Activated T-helper 2 cell treated with anti-CD3 and anti-CD28 coated beads, Interferon-gamma antibody, Interleukin-2, Interleukin-4, amounts not matched to agents 10 μg/mL and 5 μg/mL and 100 μg/mL, durations not matched to agents 14 hours and 24 hours and 36 hours (primary cell): ENCODE measurements at regions of chr3 and their contacts with region 1.

Region 1: GRCh38 chr3:31531992-31532586 is 636 bp upstream of the STT3B start:
- DNase-seq: peak; percentile 98
- H3K4me3 Mint-ChIP-seq: peak overlapping the region; percentile 82
- H3K27ac Mint-ChIP-seq: peak overlapping the region; percentile 98
- H3K4me1 Mint-ChIP-seq: peaks cover 16% of the 10 kb centered on the region
- H3K27me3 Mint-ChIP-seq: peaks cover 5% of the 10 kb centered on the region

Region 2: DNA sequence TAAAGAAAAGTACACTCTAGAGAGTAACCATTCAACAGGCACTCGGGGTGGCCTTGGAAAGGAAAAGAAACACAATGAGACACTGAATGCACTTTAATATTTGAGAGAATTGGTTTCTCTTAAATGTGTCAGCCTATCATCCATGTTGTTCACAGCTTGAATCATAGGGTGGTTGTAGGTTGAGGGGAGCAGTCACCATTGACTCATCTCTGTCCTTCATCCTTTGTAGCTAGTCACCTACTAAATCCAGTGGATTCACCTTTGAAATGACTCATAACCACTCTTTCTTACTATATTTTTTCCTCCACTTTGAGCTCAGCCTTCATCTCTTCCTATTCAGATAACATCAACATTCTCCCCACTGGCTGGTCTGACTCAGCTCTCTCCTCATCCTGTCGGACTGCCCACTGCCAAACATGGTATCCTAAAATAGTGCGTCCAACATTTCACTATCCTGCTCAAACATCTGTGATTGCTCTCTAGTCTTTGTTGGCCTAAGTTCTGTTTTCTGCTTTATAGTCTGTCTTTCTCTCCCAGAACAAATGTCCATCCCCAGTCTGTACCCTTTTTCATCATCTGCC is 455.0 kb before region 1 on chr3:
- intact Hi-C with region 1: loop called (anchors 1 kb)
- DNase-seq: peak; percentile 18
- H3K4me3 Mint-ChIP-seq: no peak overlapping the region
- H3K27ac Mint-ChIP-seq: peak overlapping the region; percentile 52
- H3K4me1 Mint-ChIP-seq: peaks cover 34% of the 10 kb centered on the region
- H3K27me3 Mint-ChIP-seq: peaks cover 7% of the 10 kb centered on the region

Region 3: DNA sequence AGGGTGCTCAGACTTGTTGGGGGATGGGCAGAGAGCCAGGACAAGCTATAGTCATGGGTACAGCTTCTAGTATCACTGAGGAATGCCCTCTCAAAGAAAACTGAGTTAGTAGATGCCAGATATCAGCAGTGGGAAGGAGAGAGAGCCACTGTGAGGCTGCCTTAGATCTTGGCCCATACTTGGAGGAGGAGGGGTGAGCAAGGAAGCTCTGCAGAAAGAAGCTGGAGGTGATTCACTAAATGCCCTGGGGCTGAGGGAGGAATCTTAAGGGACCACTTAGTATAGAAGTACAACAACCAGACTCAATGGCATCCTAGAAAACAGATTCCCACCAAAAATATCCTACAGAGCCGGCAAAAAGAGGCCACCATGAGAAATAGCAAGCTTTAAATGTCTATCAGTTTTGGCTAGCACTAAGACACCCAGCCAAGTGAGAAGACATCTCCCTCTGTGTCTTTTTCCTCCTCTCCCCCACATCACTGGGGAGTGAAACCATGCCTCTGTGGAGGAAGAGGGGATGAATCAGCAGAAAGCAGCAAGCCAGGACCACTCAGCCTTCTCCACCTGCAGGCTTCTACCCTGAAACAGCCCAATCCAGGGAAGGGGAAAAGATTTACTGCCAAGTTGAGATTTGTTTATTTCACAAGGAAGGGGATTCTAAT is 281.8 kb before region 1 on chr3:
- intact Hi-C with region 1: loop called (anchors 2 kb)
- DNase-seq: no peak
- H3K4me3 Mint-ChIP-seq: no peak overlapping the region
- H3K27ac Mint-ChIP-seq: peak overlapping the region; percentile 5
- H3K4me1 Mint-ChIP-seq: peaks cover 57% of the 10 kb centered on the region
- H3K27me3 Mint-ChIP-seq: peaks cover under 1% of the 10 kb centered on the region

Region 4: GRCh38 chr3:31321620-31322019 is 210.5 kb before region 1 on chr3:
- intact Hi-C with region 1: no loop called
- DNase-seq: no peak
- H3K4me3 Mint-ChIP-seq: no peak overlapping the region
- H3K27ac Mint-ChIP-seq: no peak overlapping the region
- H3K4me1 Mint-ChIP-seq: no peaks in the 10 kb centered on the region
- H3K27me3 Mint-ChIP-seq: peaks cover 7% of the 10 kb centered on the region

Region 5: GRCh38 chr3:31754575-31755278 is 222.6 kb after region 1 on chr3:
- intact Hi-C with region 1: loop called (anchors 1 kb)
- DNase-seq: peak; percentile 16
- H3K4me3 Mint-ChIP-seq: no peak overlapping the region
- H3K27ac Mint-ChIP-seq: peak overlapping the region; percentile 98
- H3K4me1 Mint-ChIP-seq: peaks cover 54% of the 10 kb centered on the region
- H3K27me3 Mint-ChIP-seq: no peaks in the 10 kb centered on the region

Region 6: GRCh38 chr3:31981206-31982181 is 449.4 kb after region 1 on chr3 and contains the starts of genes OSBPL10 and ZNF860:
- intact Hi-C with region 1: loop called (anchors 2 kb)
- DNase-seq: no peak
- H3K4me3 Mint-ChIP-seq: peak within 1 kb of the TSS; percentile 86
- H3K27ac Mint-ChIP-seq: peak within 1 kb of the TSS; percentile 65
- H3K4me1 Mint-ChIP-seq: peaks cover 21% of the 10 kb centered on the region
- H3K27me3 Mint-ChIP-seq: peaks cover 36% of the 10 kb centered on the region
- total RNA-seq, gene OSBPL10: 42.5 and 47.6 TPM in 2 replicates
- total RNA-seq, gene ZNF860: 1.8 and 2.0 TPM in 2 replicates

Region 7: GRCh38 chr3:32684800-32685542 is 1152.9 kb after region 1 on chr3 and contains the start of gene CNOT10:
- intact Hi-C with region 1: loop called (anchors 2 kb)
- DNase-seq: peak; percentile 97
- H3K4me3 Mint-ChIP-seq: peak within 1 kb of the TSS; percentile 87
- H3K27ac Mint-ChIP-seq: peak within 1 kb of the TSS; percentile 90
- H3K4me1 Mint-ChIP-seq: peaks cover 27% of the 10 kb centered on the region
- H3K27me3 Mint-ChIP-seq: peaks cover 3% of the 10 kb centered on the region
- total RNA-seq, gene CNOT10: 51.5 and 53.5 TPM in 2 replicates